ENCODE measurements at regions of chr13 and their contacts with region 1.

Region 1: DNA sequence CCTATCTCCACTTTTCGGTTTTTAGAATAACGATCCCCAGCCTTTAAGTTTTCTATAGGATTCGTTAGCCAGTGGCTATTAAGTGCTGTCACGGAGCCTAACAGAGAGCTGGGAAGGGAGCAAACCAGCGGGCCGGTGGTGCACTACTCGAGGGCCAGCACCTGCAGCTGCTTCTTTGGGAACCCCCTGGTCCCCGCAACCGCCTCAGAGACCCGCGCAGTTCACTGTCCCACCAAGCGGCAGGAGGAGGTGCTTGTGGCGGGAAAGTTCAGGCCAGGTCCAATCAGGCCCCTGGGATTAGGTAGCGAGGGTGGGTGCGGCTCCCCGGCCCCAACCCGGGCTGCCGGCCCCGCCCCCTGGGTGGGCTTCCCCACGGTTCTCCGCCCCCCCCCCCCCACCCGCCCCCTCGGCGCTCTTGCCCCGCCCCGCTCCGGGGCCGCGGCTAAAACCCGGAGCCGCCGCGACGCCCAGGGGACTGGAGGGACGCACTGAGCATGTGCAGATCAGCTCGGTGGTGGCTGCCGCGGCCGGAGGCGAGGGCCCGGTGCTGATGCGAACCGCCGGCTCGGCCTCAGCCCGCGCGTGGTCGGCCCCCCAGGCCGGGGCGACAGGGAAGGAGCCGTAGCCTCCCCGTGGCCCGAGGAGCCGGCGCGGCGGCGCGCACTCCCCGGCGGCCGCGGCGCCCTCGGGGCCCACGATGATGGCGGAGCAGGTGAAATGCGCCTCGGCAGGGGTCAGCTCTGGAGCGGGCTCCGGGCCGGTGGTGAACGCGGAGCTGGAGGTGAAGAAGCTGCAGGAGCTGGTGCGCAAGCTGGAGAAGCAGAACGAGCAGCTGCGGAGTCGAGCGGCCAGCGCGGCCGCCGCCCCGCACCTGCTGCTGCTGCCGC is at the start of gene SLAIN1:
- DNase-seq: peak; percentile 75
- H3K4me3 Mint-ChIP-seq: peak within 1 kb of the TSS; percentile 98
- H3K27ac Mint-ChIP-seq: peak within 1 kb of the TSS; percentile 54
- H3K4me1 Mint-ChIP-seq: peaks cover 34% of the 10 kb centered on the region
- H3K27me3 Mint-ChIP-seq: peaks cover 26% of the 10 kb centered on the region
- total RNA-seq, gene SLAIN1: 33.3 and 35.9 TPM in 2 replicates

Region 2: DNA sequence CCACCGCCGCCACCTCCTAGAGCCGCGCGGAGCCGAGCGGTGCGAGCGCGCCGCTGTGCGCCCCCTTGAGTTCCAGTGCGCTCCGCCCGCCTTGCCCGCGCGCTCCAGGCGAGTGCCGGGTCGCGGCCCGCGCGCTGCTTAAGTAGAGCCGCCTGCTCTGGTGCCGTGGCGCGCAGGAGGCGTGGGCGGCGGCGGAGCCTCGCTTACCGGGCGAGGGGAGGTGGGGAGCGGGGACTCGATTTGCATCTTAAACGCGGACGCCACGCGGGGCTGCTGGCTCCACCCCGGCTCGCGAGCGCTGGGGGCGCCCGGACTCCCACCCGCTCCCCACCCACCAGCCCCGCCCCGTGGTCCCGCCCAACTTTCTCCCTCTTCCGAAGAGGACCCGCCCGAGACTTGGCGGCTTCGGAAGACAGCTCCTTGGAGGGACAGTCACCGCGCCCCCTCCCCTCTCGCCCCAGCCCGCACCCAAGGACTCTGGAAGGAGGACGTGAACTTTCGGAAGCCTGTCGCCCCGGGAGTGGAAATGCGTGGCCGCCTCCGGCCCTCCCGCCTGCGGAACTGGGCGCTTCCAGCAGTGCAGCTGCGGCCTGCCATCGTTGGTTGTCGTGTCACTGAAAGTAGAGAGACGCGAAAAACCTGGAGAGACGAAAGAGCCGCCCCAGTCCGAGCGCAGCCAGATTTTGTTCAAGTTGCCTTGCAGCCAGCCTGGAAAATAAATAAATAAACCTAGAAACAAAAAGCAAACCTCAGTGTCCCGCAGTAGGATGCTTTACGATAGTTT is 811.0 kb before region 1 on chr13 and contains the start of gene KCTD12:
- intact Hi-C with region 1: loop called (anchors 10 kb)
- DNase-seq: peak; percentile 75
- H3K4me3 Mint-ChIP-seq: peak within 1 kb of the TSS; percentile 88
- H3K27ac Mint-ChIP-seq: peak within 1 kb of the TSS; percentile 75
- H3K4me1 Mint-ChIP-seq: peaks cover 32% of the 10 kb centered on the region
- H3K27me3 Mint-ChIP-seq: peaks cover 25% of the 10 kb centered on the region
- total RNA-seq, gene KCTD12: 12.7 and 13.2 TPM in 2 replicates

Region 3: DNA sequence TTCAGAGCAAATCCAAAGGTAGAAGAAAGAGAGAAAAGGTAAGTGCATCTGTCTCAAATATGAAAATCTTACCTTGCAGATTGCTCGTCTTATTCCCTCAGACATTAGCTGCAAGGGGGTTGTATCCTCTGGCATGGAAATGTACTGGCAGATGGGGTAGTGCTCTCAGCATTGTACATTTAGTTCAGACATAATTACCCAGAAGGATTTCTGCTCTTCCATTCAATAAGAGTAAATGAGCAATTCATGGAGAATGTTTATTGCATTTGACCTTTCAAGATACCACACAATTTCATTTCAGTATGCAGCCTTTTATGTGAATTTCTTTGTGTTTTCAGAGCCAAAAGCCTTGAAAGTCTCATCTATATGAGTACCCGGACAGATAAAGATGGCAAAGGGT is 98.1 kb before region 1 on chr13:
- intact Hi-C with region 1: loop called (anchors 5 kb)
- DNase-seq: no peak
- H3K4me3 Mint-ChIP-seq: no peak overlapping the region
- H3K27ac Mint-ChIP-seq: no peak overlapping the region
- H3K4me1 Mint-ChIP-seq: no peaks in the 10 kb centered on the region
- H3K27me3 Mint-ChIP-seq: peaks cover 26% of the 10 kb centered on the region

Region 4: GRCh38 chr13:77653301-77653700 is 44.2 kb before region 1 on chr13:
- intact Hi-C with region 1: no loop called
- DNase-seq: no peak
- H3K4me3 Mint-ChIP-seq: no peak overlapping the region
- H3K27ac Mint-ChIP-seq: no peak overlapping the region
- H3K4me1 Mint-ChIP-seq: no peaks in the 10 kb centered on the region
- H3K27me3 Mint-ChIP-seq: peaks cover 4% of the 10 kb centered on the region

Region 5: GRCh38 chr13:77715233-77715891 is 17.9 kb after region 1 on chr13:
- intact Hi-C with region 1: loop called (anchors 2 kb)
- DNase-seq: no peak
- H3K4me3 Mint-ChIP-seq: no peak overlapping the region
- H3K27ac Mint-ChIP-seq: peak overlapping the region; percentile 30
- H3K4me1 Mint-ChIP-seq: peaks cover 24% of the 10 kb centered on the region
- H3K27me3 Mint-ChIP-seq: no peaks in the 10 kb centered on the region

Region 6: DNA sequence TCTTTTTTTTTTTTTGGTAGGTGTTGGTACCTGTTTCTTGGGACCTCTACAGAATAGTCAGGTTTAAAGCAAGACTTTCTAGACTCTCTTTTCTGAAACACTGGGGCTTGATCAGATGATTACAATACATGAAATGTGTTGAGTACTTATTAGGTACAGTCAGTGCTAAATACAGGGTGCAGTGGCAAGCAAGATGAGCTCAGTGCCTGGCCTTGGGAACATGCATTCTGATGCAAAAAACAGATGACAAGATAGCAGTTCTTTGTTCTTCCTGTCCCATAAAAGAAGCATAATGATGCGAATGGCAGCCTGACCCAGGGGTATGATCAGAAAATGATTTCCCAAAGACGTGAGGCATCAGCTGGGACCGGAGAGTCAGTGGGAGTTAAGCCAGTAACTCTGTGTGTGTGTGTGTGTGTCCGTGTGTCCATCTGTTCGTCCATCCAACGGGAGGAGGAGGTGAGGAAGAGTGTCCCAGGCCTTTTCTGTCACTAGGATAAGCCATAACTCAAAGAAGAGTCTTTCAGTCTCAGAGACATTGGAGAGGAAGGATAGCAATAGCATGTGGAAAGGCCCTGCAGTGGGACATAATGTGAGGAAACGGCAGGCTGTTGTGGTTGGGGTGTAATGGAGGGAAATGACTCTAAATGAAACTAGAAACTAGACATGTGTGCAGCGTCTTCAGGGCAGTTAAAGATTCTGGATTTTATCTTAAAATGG is 32.2 kb after region 1 on chr13:
- intact Hi-C with region 1: loop called (anchors 1 kb)
- DNase-seq: peak; percentile 51
- H3K4me3 Mint-ChIP-seq: peak overlapping the region; percentile 57
- H3K27ac Mint-ChIP-seq: peak overlapping the region; percentile 83
- H3K4me1 Mint-ChIP-seq: peaks cover 40% of the 10 kb centered on the region
- H3K27me3 Mint-ChIP-seq: no peaks in the 10 kb centered on the region

Region 7: DNA sequence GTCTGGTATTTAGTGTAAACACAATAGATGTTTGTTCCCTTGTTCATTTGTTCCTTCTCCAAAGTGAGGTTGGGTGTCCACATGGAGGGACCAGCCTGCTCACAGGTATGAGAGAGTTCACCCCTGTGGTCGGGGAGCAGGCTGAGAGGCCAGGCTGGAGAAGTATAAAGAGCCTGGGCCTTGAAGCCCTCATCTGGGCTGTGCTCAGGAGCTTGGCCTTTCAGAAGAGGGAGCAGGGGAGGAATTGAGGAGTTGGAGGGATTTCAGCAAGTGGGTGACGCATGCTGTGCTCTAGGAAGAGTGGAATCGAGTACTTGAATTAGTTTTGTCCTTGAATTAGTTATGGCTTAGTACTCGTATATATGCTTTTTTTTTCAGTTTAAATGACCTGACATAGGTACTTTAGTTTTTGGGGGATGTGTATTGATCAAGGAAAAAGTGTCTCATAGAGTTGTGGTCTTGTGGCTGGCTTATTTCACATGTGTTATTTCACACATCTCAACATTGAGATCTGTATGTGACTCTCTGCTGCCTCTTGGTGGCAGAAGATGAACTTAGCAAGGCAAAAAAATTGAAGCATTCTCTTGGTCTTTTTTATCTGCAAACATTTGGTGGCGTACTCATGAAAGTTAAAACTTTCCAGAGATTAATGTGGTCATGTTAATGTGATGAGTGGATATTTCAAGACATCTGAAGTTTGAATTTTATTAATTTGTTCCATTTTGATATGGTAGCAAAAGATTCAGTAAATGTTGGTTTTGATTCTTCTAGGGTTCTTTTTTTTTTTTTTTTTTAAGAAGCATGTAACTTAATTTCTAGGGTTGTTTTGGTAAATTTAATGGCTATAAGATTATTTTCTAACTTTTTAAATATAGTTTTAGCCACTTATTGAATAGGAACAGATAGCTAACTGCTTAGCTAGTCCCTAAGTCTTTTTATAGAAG is 54.3 kb after region 1 on chr13:
- intact Hi-C with region 1: loop called (anchors 1 kb)
- DNase-seq: peak; percentile 23
- H3K4me3 Mint-ChIP-seq: no peak overlapping the region
- H3K27ac Mint-ChIP-seq: no peak overlapping the region
- H3K4me1 Mint-ChIP-seq: peaks cover 18% of the 10 kb centered on the region
- H3K27me3 Mint-ChIP-seq: no peaks in the 10 kb centered on the region

Measured in activated T-helper 2 cell treated with anti-CD3 and anti-CD28 coated beads, Interferon-gamma antibody, Interleukin-2, Interleukin-4, amounts not matched to agents 10 μg/mL and 5 μg/mL and 100 μg/mL, durations not matched to agents 14 hours and 24 hours and 36 hours (primary cell).